HCT116 (cell line): ENCODE measurements at regions of chr7 and their contacts with region 1.

Region 1: GRCh38 chr7:66493235-66494181 is 135.2 kb upstream of the KCTD7 start:
- DNase-seq: peak; percentile 95
- ATAC-seq: peak; percentile 90
- H3K4me3 ChIP-seq: peak overlapping the region; percentile 84 to 88
- H3K27ac ChIP-seq: peak overlapping the region; percentile 66
- H3K4me1 ChIP-seq: peaks cover 0 to 8% of the 10 kb centered on the region in 2 experiments; a peak in 2 of 4 replicates
- H3K27me3 ChIP-seq: no peaks in the 10 kb centered on the region
- CTCF ChIP-seq: peak in 1 of 3 experiments; percentile 35; a peak in 3 of 6 replicates
- POLR2A ChIP-seq: peak; percentile 92
- RAD21 ChIP-seq: peak; percentile 36

Region 2: GRCh38 chr7:66140924-66141323 is 352.6 kb before region 1 on chr7:
- CTCF ChIA-PET with region 1: no interaction called
- POLR2A ChIA-PET with region 1: no interaction called
- RAD21 ChIA-PET with region 1: no interaction called
- intact Hi-C with region 1: loop called (anchors 10 kb)
- DNase-seq: no peak
- ATAC-seq: peak; percentile 81
- H3K4me3 ChIP-seq: no peak overlapping the region
- H3K27ac ChIP-seq: 0 out of 2 replicates have a peak overlapping the region, but pooled peaks have one; percentile 47
- H3K4me1 ChIP-seq: peaks cover 15 to 29% of the 10 kb centered on the region in 2 experiments
- H3K27me3 ChIP-seq: no peaks in the 10 kb centered on the region
- CTCF ChIP-seq: peak in 2 of 3 experiments; percentile 50 to 51; a peak in 4 of 6 replicates
- POLR2A ChIP-seq: no peak
- RAD21 ChIP-seq: peak; percentile 70

Region 3: GRCh38 chr7:67447913-67448670 is 954.6 kb after region 1 on chr7:
- CTCF ChIA-PET with region 1: no interaction called
- POLR2A ChIA-PET with region 1: no interaction called
- RAD21 ChIA-PET with region 1: no interaction called
- intact Hi-C with region 1: no loop called
- DNase-seq: no peak
- ATAC-seq: no peak
- H3K4me3 ChIP-seq: no peak overlapping the region
- H3K27ac ChIP-seq: no peak overlapping the region
- H3K4me1 ChIP-seq: no peaks in the 10 kb centered on the region
- H3K27me3 ChIP-seq: no peaks in the 10 kb centered on the region; the same call in 1 of the 2 replicates
- CTCF ChIP-seq: no peak
- POLR2A ChIP-seq: no peak
- RAD21 ChIP-seq: no peak